ENCODE measurements at regions of chr3 and their contacts with region 1.

Region 1: DNA sequence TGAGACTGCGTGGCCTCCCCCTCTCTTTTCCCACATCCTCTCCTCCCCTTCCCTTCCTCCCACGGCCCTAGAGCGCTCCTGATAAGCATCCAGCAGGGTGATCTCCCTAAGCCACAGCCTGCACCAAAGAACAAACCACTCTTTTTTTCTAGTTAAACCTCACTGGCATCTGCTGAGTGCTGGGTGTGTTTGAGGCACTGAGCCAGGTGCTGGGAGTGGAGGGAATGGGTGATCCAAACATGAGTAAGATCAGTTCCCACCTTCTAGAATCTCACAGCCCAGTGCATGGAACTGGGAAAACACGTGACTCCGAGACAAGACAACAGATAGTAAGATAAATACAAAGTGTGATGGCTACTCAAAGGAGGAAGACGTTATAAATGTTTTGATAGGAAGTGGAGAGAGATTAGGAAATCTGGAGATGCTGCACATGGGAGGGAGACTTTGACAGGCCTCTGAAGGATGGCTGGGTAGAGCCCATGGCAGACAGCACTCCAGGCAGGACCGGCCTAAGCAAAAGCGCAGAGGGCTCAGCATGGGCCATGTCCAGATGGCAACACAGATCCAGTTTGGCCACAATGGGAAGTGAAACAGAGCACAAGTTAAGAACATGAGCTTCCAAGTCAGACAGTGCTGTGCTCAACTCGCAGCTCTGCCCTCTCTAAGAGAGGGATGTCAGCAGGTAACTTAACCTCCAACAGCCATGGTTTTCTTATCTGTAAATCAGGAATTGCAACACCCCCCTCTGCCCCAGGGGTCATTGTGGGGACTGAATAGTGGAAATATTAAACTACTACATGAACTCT is 55.6 kb downstream of the CCR3 start:
- DNase-seq: no peak
- H3K4me3 Mint-ChIP-seq: peak overlapping the region; percentile 34
- H3K27ac Mint-ChIP-seq: peak overlapping the region; percentile 93
- H3K4me1 Mint-ChIP-seq: peaks cover 84% of the 10 kb centered on the region
- H3K27me3 Mint-ChIP-seq: no peaks in the 10 kb centered on the region

Region 2: DNA sequence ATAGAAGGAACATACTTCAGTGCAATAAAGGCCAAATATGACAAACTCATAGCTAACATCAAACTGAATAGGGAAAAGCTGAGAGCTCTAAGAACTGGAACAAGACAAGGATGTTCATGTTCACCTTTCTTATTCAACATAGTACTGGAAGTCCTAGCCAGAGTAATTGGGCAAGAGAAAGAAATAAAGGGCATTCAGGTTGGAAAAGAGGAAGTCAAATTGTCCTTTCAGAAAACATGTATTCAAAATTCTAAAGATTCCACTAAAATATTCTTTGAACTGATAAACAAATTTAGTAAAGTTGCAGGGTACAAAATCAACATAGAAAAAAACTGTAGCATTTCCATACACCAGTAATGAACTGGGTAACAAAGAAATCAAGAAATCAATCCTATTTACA is 1685.2 kb before region 1 on chr3:
- intact Hi-C with region 1: no loop called
- DNase-seq: no peak
- H3K4me3 Mint-ChIP-seq: no peak overlapping the region
- H3K27ac Mint-ChIP-seq: no peak overlapping the region
- H3K4me1 Mint-ChIP-seq: no peaks in the 10 kb centered on the region
- H3K27me3 Mint-ChIP-seq: peaks cover 2% of the 10 kb centered on the region

Region 3: DNA sequence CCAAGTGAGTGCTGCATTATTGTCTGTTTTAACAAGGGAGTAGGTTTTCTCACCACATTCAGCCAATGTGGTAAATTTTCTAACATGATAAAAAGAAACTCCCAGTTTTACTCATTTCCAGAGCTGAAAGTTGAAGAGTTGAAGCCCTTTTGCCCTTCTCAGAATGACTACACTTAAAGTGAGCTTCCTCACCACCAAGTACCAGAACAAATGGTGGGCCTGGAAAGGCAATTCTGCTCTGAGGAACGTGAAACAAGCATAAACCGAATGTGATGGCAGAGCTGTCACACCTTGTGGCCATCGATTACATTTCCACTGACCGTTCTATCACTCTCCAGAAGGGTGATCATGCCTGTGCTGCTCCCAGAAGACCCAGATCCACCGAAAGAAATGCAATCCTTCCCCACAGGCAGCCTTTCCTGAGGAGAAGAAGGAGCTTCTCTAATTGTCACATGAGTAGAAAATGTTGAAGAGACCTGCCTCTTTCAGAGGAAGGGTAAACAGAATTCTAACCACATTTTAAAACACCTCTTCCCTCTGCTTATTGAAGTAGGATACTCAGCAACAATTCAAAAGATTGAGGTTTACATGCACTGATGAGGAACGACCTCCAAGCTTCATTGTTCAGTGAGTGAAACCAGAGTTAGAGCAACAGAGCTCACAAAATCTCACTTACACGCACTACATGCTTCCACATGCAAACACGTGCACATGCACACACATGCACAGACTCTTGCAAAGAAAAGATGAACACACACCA is 432.9 kb before region 1 on chr3:
- intact Hi-C with region 1: loop called (anchors 1 kb)
- DNase-seq: peak; percentile 41
- H3K4me3 Mint-ChIP-seq: peak overlapping the region; percentile 55
- H3K27ac Mint-ChIP-seq: peak overlapping the region; percentile 42
- H3K4me1 Mint-ChIP-seq: peaks cover 53% of the 10 kb centered on the region
- H3K27me3 Mint-ChIP-seq: peaks cover 31% of the 10 kb centered on the region

Region 4: GRCh38 chr3:45978006-45978761 is 319.7 kb before region 1 on chr3:
- intact Hi-C with region 1: loop called (anchors 5 kb)
- DNase-seq: peak; percentile 72
- H3K4me3 Mint-ChIP-seq: peak overlapping the region; percentile 86
- H3K27ac Mint-ChIP-seq: peak overlapping the region; percentile 98
- H3K4me1 Mint-ChIP-seq: peaks cover 89% of the 10 kb centered on the region
- H3K27me3 Mint-ChIP-seq: no peaks in the 10 kb centered on the region

Region 5: GRCh38 chr3:46269556-46269955 is 28.3 kb before region 1 on chr3:
- intact Hi-C with region 1: loop called (anchors 1 kb)
- DNase-seq: peak; percentile 16
- H3K4me3 Mint-ChIP-seq: peak overlapping the region; percentile 12
- H3K27ac Mint-ChIP-seq: peak overlapping the region; percentile 63
- H3K4me1 Mint-ChIP-seq: peaks cover 70% of the 10 kb centered on the region
- H3K27me3 Mint-ChIP-seq: peaks cover 16% of the 10 kb centered on the region

Region 6: DNA sequence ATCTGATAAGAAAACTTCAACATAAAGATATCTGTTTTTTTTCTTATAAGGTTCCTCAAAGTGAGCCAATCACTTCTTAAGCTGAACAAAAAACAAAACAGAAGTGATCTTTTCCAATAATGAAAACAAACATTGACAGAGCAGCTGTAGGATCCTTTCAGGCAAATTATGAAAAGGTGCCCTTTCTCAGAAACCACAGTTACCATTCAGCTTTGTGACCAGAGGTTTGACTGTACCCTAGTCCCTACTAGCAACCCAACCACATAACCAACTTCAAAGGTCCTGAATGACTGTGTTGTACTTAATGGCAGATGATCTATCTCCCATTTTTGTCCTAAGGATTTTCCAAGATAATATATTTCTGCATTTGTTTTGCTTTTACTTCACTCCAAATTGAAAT is 16.7 kb after region 1 on chr3:
- intact Hi-C with region 1: loop called (anchors 1 kb)
- DNase-seq: no peak
- H3K4me3 Mint-ChIP-seq: no peak overlapping the region
- H3K27ac Mint-ChIP-seq: no peak overlapping the region
- H3K4me1 Mint-ChIP-seq: peaks cover 7% of the 10 kb centered on the region
- H3K27me3 Mint-ChIP-seq: peaks cover 10% of the 10 kb centered on the region

Region 7: DNA sequence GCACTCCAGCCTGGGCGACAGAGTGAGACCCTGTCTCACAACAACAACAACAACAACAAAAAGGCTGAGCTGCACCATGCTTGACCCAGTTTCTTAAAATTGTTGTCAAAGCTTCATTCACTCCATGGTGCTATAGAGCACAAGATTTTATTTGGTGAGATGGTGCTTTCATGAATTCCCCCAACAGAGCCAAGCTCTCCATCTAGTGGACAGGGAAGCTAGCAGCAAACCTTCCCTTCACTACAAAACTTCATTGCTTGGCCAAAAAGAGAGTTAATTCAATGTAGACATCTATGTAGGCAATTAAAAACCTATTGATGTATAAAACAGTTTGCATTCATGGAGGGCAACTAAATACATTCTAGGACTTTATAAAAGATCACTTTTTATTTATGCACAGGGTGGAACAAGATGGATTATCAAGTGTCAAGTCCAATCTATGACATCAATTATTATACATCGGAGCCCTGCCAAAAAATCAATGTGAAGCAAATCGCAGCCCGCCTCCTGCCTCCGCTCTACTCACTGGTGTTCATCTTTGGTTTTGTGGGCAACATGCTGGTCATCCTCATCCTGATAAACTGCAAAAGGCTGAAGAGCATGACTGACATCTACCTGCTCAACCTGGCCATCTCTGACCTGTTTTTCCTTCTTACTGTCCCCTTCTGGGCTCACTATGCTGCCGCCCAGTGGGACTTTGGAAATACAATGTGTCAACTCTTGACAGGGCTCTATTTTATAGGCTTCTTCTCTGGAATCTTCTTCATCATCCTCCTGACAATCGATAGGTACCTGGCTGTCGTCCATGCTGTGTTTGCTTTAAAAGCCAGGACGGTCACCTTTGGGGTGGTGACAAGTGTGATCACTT is 74.9 kb after region 1 on chr3:
- intact Hi-C with region 1: loop called (anchors 1 kb)
- DNase-seq: peak; percentile 31
- H3K4me3 Mint-ChIP-seq: peak overlapping the region; percentile 58
- H3K27ac Mint-ChIP-seq: peak overlapping the region; percentile 22
- H3K4me1 Mint-ChIP-seq: peaks cover 84% of the 10 kb centered on the region
- H3K27me3 Mint-ChIP-seq: peaks cover 6% of the 10 kb centered on the region

Region 8: GRCh38 chr3:46612324-46612723 is 314.5 kb after region 1 on chr3 and contains the start of gene FAM240A:
- intact Hi-C with region 1: no loop called
- DNase-seq: no peak
- H3K4me3 Mint-ChIP-seq: no peak within 1 kb of the TSS
- H3K27ac Mint-ChIP-seq: no peak within 1 kb of the TSS
- H3K4me1 Mint-ChIP-seq: no peaks in the 10 kb centered on the region
- H3K27me3 Mint-ChIP-seq: peaks cover 30% of the 10 kb centered on the region
- total RNA-seq, gene FAM240A: not detected in 2 replicates